Heart right ventricle (tissue), 16 donors: ENCODE measurements at regions of chr5 and their contacts with region 1.

Region 1: GRCh38 chr5:123763201-123763600 is 251.2 kb downstream of the CSNK1G3 start:
- DNase-seq: no peak
- ATAC-seq: no peak
- H3K4me3 ChIP-seq: no peak overlapping the region
- H3K27ac ChIP-seq: no peak overlapping the region
- H3K4me1 ChIP-seq: no peaks in the 10 kb centered on the region
- H3K27me3 ChIP-seq: no peaks in the 10 kb centered on the region
- CTCF ChIP-seq: no peak

Region 2: GRCh38 chr5:124061663-124062062 is 298.5 kb after region 1 on chr5:
- intact Hi-C with region 1: loop called in 1 of 10 experiments (anchors 10 kb)
- DNase-seq: peak in 1 of 2 donors; percentile 18
- ATAC-seq: no peak
- H3K4me3 ChIP-seq: no peak overlapping the region
- H3K27ac ChIP-seq: no peak overlapping the region
- H3K4me1 ChIP-seq: peaks cover 4 to 18% (median 14%) of the 10 kb centered on the region in 9 donors
- H3K27me3 ChIP-seq: no peaks in the 10 kb centered on the region
- CTCF ChIP-seq: no peak